GM12878 (cell line): ENCODE measurements at regions of chr4 and their contacts with region 1.

Region 1: GRCh38 chr4:138680989-138681604 is 334.5 kb upstream of the NOCT start:
- DNase-seq: peak; percentile 11
- ATAC-seq: peak; percentile 88
- H3K4me3 ChIP-seq: no peak overlapping the region
- H3K27ac ChIP-seq: no peak overlapping the region
- H3K4me1 ChIP-seq: no peaks in the 10 kb centered on the region
- H3K27me3 ChIP-seq: peaks cover 0 to 1% of the 10 kb centered on the region in 2 experiments; a peak in 1 of 4 replicates
- CTCF ChIP-seq: peak; percentile 80 to 94 (median 87)
- EP300 ChIP-seq: no peak
- POLR2A ChIP-seq: no peak
- RAD21 ChIP-seq: peak; percentile 96

Region 2: DNA sequence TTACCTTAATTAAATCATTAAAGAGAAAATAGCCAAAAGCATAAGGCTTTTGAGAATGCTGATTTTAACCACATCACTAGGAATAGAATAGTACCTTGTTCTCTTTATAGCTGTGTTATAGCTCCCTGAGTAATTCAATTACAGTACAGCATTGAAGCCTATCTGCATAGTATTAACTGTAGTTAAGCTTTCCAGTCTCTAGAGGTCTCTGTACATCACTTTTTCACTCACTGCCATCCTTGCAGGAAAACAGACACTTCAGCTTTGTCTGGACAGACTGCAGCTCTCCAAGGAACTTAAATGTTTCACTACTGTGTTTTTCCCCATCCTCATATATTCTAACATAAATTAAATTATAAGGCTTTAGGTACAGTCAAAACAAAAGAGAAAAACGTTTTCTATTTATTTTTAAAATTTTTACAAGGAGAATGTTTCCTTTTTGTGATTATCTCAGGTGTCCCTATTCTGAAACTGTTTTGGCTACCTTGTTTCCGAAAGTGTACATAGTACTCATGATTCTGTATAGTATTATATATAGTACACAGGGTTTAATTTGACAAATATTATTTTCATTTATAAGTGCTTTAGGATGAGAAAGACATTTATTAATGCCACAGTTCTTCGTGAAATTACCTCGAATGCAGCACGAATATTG is 1556.7 kb before region 1 on chr4:
- CTCF ChIA-PET with region 1: interaction called, 12 read pairs
- POLR2A ChIA-PET with region 1: no interaction called
- RAD21 ChIA-PET with region 1: interaction called, 11 read pairs
- SMC1A ChIA-PET with region 1: no interaction called
- in situ Hi-C with region 1: no loop called
- intact Hi-C with region 1: no loop called
- DNase-seq: peak; percentile 1
- ATAC-seq: peak; percentile 96
- H3K4me3 ChIP-seq: no peak overlapping the region
- H3K27ac ChIP-seq: no peak overlapping the region
- H3K4me1 ChIP-seq: no peaks in the 10 kb centered on the region
- H3K27me3 ChIP-seq: no peaks in the 10 kb centered on the region
- CTCF ChIP-seq: peak; percentile 42 to 64 (median 43); a peak in 5 of 6 replicates
- EP300 ChIP-seq: no peak
- POLR2A ChIP-seq: no peak
- RAD21 ChIP-seq: peak; percentile 63

Region 3: DNA sequence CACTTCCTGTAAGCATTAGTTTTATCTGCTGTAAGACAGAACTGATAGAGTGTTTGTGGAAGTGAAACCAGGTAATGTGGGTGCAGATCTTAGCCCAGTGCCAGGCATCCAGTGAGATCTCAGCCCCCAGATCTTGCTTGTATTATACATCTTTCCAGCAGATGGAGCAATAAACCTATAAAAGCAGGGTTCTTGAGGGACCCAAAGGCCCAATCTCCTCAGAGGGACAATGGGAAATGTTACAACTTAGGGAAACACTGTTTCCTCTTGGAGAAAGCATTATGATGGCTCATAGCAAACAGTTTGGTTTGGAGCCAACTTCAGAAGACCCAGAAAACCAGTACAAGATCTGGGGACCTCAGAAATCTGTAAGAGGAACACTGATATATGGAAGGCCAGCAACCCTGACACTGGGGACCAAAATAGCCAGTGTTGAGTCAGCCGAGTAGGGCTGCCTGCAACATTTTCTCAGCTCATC is 645.3 kb before region 1 on chr4:
- CTCF ChIA-PET with region 1: interaction called, 65 read pairs
- POLR2A ChIA-PET with region 1: no interaction called
- RAD21 ChIA-PET with region 1: interaction called, 25 read pairs
- SMC1A ChIA-PET with region 1: interaction called, 73 read pairs
- in situ Hi-C with region 1: loop called (anchors 5 kb)
- intact Hi-C with region 1: loop called (anchors 1 kb)
- DNase-seq: peak; percentile 69
- ATAC-seq: peak; percentile 100
- H3K4me3 ChIP-seq: no peak overlapping the region
- H3K27ac ChIP-seq: no peak overlapping the region
- H3K4me1 ChIP-seq: no peaks in the 10 kb centered on the region
- H3K27me3 ChIP-seq: no peaks in the 10 kb centered on the region
- CTCF ChIP-seq: peak; percentile 44 to 71 (median 64); a peak in 5 of 6 replicates
- EP300 ChIP-seq: 0 out of 4 replicates have a peak, but pooled peaks of 1 of the 2 experiments have one; percentile 43
- POLR2A ChIP-seq: no peak
- RAD21 ChIP-seq: peak; percentile 86

Region 4: GRCh38 chr4:138190452-138190858 is 490.6 kb before region 1 on chr4:
- CTCF ChIA-PET with region 1: interaction called, 6 read pairs
- POLR2A ChIA-PET with region 1: no interaction called
- RAD21 ChIA-PET with region 1: interaction called, 4 read pairs
- SMC1A ChIA-PET with region 1: interaction called, 5 read pairs
- in situ Hi-C with region 1: no loop called
- intact Hi-C with region 1: loop called (anchors 5 kb)
- DNase-seq: peak; percentile 66
- ATAC-seq: peak; percentile 89
- H3K4me3 ChIP-seq: no peak overlapping the region
- H3K27ac ChIP-seq: peak overlapping the region; percentile 93
- H3K4me1 ChIP-seq: peaks cover 22% of the 10 kb centered on the region
- H3K27me3 ChIP-seq: no peaks in the 10 kb centered on the region
- CTCF ChIP-seq: no peak
- EP300 ChIP-seq: peak; percentile 98
- POLR2A ChIP-seq: no peak
- RAD21 ChIP-seq: no peak

Region 5: DNA sequence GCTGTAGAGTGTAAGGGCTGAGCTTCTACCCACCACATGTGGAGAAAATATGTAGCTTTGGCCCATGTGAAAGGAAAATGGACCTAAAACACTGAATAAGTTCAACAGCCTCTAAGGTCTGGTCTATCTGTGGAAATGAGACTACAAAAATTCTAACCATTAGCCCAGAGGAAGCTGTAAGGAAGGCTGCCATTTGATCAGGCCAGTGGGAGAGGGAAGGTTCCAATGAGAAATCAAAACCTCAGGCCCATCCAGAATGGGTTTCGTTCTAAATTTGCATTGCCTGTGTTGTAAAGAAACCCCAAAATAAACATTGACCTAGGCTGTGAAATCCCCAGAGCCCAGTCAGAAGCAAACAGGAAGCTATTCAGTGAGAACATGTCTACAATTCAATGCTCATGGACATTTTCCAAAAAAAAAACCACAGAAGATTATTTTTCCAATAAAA is 118.5 kb before region 1 on chr4:
- CTCF ChIA-PET with region 1: interaction called, 5 read pairs
- POLR2A ChIA-PET with region 1: no interaction called
- RAD21 ChIA-PET with region 1: no interaction called
- SMC1A ChIA-PET with region 1: interaction called, 18 read pairs
- in situ Hi-C with region 1: no loop called
- intact Hi-C with region 1: no loop called
- DNase-seq: peak; percentile 21
- ATAC-seq: peak; percentile 63
- H3K4me3 ChIP-seq: no peak overlapping the region
- H3K27ac ChIP-seq: no peak overlapping the region
- H3K4me1 ChIP-seq: no peaks in the 10 kb centered on the region
- H3K27me3 ChIP-seq: no peaks in the 10 kb centered on the region
- CTCF ChIP-seq: no peak
- EP300 ChIP-seq: no peak
- POLR2A ChIP-seq: no peak
- RAD21 ChIP-seq: no peak

Region 6: DNA sequence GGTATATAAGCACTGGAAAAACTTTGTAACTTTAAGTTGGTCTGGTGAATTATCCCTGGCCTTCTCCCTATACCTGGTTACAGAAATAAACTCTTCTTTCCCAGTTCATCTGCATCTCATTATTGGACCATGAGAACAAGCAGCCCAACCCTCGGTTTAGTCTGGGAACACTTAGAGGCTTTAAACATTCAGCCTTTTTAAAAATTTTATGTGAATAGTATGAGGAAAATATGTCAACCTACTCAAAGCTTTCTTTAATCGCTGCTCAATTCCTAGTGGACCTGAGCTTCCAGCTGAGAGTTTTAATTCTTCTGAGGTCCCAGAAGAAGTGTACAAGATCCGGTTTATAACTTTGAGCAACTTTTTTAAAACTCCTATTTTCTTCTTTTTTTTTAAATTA is 24.1 kb before region 1 on chr4:
- CTCF ChIA-PET with region 1: interaction called, 13 read pairs
- POLR2A ChIA-PET with region 1: no interaction called
- RAD21 ChIA-PET with region 1: no interaction called
- SMC1A ChIA-PET with region 1: interaction called, 4 read pairs
- in situ Hi-C with region 1: no loop called
- intact Hi-C with region 1: no loop called
- DNase-seq: no peak
- ATAC-seq: no peak
- H3K4me3 ChIP-seq: no peak overlapping the region
- H3K27ac ChIP-seq: no peak overlapping the region
- H3K4me1 ChIP-seq: no peaks in the 10 kb centered on the region
- H3K27me3 ChIP-seq: peaks cover 0 to 2% of the 10 kb centered on the region in 2 experiments; a peak in 1 of 4 replicates
- CTCF ChIP-seq: no peak
- EP300 ChIP-seq: no peak
- POLR2A ChIP-seq: no peak
- RAD21 ChIP-seq: no peak

Region 7: GRCh38 chr4:138692411-138693034 is 11.4 kb after region 1 on chr4:
- CTCF ChIA-PET with region 1: interaction called, 15 read pairs
- POLR2A ChIA-PET with region 1: no interaction called
- RAD21 ChIA-PET with region 1: interaction called, 4 read pairs
- SMC1A ChIA-PET with region 1: interaction called, 11 read pairs
- in situ Hi-C with region 1: no loop called
- intact Hi-C with region 1: no loop called
- DNase-seq: no peak
- ATAC-seq: no peak
- H3K4me3 ChIP-seq: no peak overlapping the region
- H3K27ac ChIP-seq: no peak overlapping the region
- H3K4me1 ChIP-seq: no peaks in the 10 kb centered on the region
- H3K27me3 ChIP-seq: no peaks in the 10 kb centered on the region; a peak in 1 of 4 replicates
- CTCF ChIP-seq: no peak
- EP300 ChIP-seq: no peak
- POLR2A ChIP-seq: no peak
- RAD21 ChIP-seq: no peak